ENCODE measurements at regions of chr1 and their contacts with region 1.

Region 1: GRCh38 chr1:78676347-78676982 is 26.8 kb downstream of the IFI44 start:
- DNase-seq: peak; percentile 51
- H3K4me3 ChIP-seq: no peak overlapping the region
- H3K27ac ChIP-seq: no peak overlapping the region
- H3K4me1 ChIP-seq: no peaks in the 10 kb centered on the region
- H3K27me3 ChIP-seq: no peaks in the 10 kb centered on the region
- CTCF ChIP-seq: peak; percentile 84

Region 2: GRCh38 chr1:78132174-78132947 is 544.1 kb before region 1 on chr1:
- intact Hi-C with region 1: loop called (anchors 5 kb)
- DNase-seq: no peak
- H3K4me3 ChIP-seq: no peak overlapping the region
- H3K27ac ChIP-seq: no peak overlapping the region
- H3K4me1 ChIP-seq: no peaks in the 10 kb centered on the region
- H3K27me3 ChIP-seq: no peaks in the 10 kb centered on the region
- CTCF ChIP-seq: no peak

Region 3: GRCh38 chr1:78617615-78618026 is 58.8 kb before region 1 on chr1:
- intact Hi-C with region 1: loop called (anchors 2 kb)
- DNase-seq: peak; percentile 65
- H3K4me3 ChIP-seq: no peak overlapping the region
- H3K27ac ChIP-seq: no peak overlapping the region
- H3K4me1 ChIP-seq: no peaks in the 10 kb centered on the region
- H3K27me3 ChIP-seq: no peaks in the 10 kb centered on the region
- CTCF ChIP-seq: peak; percentile 77

Region 4: DNA sequence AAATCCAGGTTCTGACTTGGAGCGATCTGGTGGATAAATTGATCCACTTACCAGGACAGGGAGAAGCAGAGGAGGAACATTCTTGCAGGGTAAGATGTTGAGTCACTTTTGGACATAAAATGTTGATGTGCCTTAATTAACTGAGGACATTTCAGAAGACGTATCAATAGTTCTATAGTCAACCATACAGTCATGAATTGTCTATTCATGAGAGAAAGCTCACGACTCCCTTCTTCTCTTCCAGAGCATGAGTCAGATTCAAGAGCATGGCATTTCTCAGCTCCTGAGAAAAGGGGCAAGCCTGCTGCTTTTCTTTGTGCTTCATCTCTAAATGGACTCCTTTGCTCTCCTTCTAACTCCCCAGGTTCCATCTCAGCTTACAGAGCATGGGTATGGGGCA is 274.3 kb after region 1 on chr1:
- intact Hi-C with region 1: no loop called
- DNase-seq: no peak
- H3K4me3 ChIP-seq: no peak overlapping the region
- H3K27ac ChIP-seq: no peak overlapping the region
- H3K4me1 ChIP-seq: no peaks in the 10 kb centered on the region
- H3K27me3 ChIP-seq: no peaks in the 10 kb centered on the region
- CTCF ChIP-seq: no peak